ENCODE measurements at regions of chr6 and their contacts with region 1.

Region 1: DNA sequence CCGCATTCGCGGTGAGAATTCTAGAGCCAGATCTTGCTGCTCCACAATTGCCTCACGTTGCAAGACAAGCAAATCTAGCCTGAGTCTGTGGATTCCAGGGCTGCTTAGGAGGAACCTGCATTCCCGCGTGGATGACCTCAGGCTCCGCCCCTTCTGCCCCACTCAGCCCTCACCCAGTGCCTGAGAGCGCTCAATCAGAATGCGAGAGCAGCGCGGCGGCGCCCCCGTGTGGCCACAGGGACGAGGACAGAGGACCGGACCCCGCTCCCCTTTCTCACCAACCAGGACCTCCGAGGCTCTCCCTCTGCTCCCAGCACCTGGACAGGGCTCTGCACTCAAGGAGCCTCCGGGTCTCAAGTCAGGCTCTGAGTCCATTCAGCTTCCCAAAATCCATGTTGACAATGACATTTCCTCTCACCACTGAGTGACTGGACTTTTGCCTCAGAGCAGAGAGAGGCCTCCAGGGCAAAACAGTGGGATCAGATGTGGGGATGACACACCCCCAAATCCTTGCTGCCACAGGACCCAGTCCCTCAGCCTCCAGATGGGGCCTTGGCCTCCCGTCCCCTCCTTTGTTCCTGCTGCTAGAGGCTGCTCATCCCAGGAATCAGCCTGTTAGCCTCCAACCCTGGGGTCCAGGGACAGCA is 52.0 kb downstream of the RPP21 start:
- DNase-seq: peak; percentile 51
- ATAC-seq: peak; percentile 100
- H3K4me3 ChIP-seq: no peak overlapping the region
- H3K27ac ChIP-seq: no peak overlapping the region
- H3K4me1 ChIP-seq: peaks cover 0 to 9% of the 10 kb centered on the region in 2 experiments; a peak in 1 of 4 replicates
- H3K27me3 ChIP-seq: no peaks in the 10 kb centered on the region
- CTCF ChIP-seq: peak; percentile 86 to 96 (median 94)
- POLR2A ChIP-seq: no peak
- RAD21 ChIP-seq: peak; percentile 90

Region 2: DNA sequence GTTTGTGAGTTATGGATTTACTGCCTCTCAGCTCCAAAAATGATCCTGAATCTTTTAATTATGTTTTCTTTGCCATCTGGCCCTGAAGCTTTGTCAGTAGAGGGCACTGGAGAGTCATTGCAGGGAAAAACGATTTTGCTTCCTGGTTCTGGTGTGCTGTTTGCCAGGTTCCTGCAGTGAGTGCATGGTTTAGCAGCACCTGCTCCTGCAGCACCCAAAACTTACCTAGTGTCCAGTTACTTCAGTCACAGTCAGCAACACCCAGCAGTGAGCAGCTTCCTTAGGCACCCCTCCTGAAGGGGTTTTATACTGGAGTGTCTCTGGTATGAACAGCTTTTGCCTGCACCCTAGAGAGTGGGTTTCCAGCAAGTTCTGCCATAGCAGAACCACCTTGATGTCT is 177.7 kb before region 1 on chr6:
- CTCF ChIA-PET with region 1: interaction called, 5 read pairs
- POLR2A ChIA-PET with region 1: no interaction called
- RAD21 ChIA-PET with region 1: interaction called in 1 of 2 experiments, 3 read pairs
- intact Hi-C with region 1: loop called (anchors 5 kb)
- DNase-seq: no peak
- ATAC-seq: peak; percentile 68
- H3K4me3 ChIP-seq: no peak overlapping the region
- H3K27ac ChIP-seq: no peak overlapping the region
- H3K4me1 ChIP-seq: peaks cover 0 to 8% of the 10 kb centered on the region in 2 experiments; a peak in 2 of 4 replicates
- H3K27me3 ChIP-seq: no peaks in the 10 kb centered on the region
- CTCF ChIP-seq: peak; percentile 75 to 88 (median 87); a peak in 5 of 6 replicates
- POLR2A ChIP-seq: no peak
- RAD21 ChIP-seq: peak; percentile 75

Region 3: GRCh38 chr6:30238174-30238795 is 158.7 kb before region 1 on chr6:
- CTCF ChIA-PET with region 1: interaction called, 9 read pairs
- POLR2A ChIA-PET with region 1: no interaction called
- RAD21 ChIA-PET with region 1: no interaction called
- intact Hi-C with region 1: loop called (anchors 1 kb)
- DNase-seq: peak; percentile 27
- ATAC-seq: peak; percentile 97
- H3K4me3 ChIP-seq: no peak overlapping the region
- H3K27ac ChIP-seq: no peak overlapping the region
- H3K4me1 ChIP-seq: no peaks in the 10 kb centered on the region
- H3K27me3 ChIP-seq: peaks cover 16% of the 10 kb centered on the region
- CTCF ChIP-seq: peak; percentile 53 to 61 (median 58); a peak in 4 of 6 replicates
- POLR2A ChIP-seq: no peak
- RAD21 ChIP-seq: peak; percentile 74

Region 4: DNA sequence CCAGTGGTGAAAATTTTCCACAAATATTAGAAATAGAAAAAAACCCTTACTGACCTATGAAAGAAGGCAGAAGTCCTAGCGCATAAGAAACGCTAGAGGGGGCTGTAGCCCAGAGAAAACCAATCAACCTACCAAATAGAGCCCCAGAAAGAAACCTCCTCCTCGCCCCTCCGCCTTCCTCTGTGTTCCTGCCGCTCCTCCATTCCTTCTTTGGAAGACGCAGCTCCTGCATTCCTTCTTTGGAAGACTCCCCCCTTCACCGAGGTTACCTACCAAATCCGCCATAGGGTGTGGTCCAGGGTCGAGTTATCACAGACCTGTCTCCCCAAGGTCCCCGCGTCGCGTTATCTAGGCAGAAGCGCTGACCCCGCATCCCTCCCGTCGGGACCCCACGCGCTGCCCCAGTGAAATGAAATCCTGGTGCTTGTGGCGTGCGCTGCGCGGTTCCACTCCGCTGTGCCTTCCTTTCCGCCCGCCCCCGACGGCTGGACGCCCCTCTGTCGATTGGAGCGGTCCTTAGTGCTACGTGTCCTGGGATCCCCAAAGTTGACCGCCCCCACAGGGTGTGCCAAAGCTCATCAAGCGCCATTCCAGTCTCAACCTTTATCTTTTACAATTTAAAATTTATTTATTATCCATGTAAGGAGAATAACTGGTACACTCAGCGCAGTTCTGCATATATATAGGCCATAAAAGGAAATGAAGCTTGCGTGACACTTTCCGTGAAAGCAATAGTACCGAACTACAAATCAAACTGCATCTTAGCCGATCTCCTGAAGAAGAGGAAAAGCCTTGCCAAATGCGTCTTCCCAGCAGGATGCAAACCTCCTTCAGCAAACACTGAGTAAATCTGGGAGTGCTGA is 39.0 kb before region 1 on chr6:
- CTCF ChIA-PET with region 1: no interaction called
- POLR2A ChIA-PET with region 1: no interaction called
- RAD21 ChIA-PET with region 1: no interaction called
- intact Hi-C with region 1: loop called (anchors 1 kb)
- DNase-seq: peak; percentile 71
- ATAC-seq: peak; percentile 98
- H3K4me3 ChIP-seq: no peak overlapping the region
- H3K27ac ChIP-seq: no peak overlapping the region
- H3K4me1 ChIP-seq: peaks cover 0 to 6% of the 10 kb centered on the region in 2 experiments; a peak in 1 of 4 replicates
- H3K27me3 ChIP-seq: 0 out of 2 replicates have a peak, but pooled peaks cover 7% of the 10 kb centered on the region
- CTCF ChIP-seq: peak; percentile 78 to 84 (median 82)
- POLR2A ChIP-seq: no peak
- RAD21 ChIP-seq: peak; percentile 70

Region 5: GRCh38 chr6:30364591-30364990 is 32.4 kb before region 1 on chr6:
- CTCF ChIA-PET with region 1: no interaction called
- POLR2A ChIA-PET with region 1: no interaction called
- RAD21 ChIA-PET with region 1: no interaction called
- intact Hi-C with region 1: loop called (anchors 2 kb)
- DNase-seq: no peak
- ATAC-seq: peak; percentile 98
- H3K4me3 ChIP-seq: no peak overlapping the region
- H3K27ac ChIP-seq: no peak overlapping the region
- H3K4me1 ChIP-seq: no peaks in the 10 kb centered on the region
- H3K27me3 ChIP-seq: peaks cover 11% of the 10 kb centered on the region; the same call in 1 of the 2 replicates
- CTCF ChIP-seq: peak; percentile 48 to 64 (median 61)
- POLR2A ChIP-seq: no peak
- RAD21 ChIP-seq: peak; percentile 53

Region 6: DNA sequence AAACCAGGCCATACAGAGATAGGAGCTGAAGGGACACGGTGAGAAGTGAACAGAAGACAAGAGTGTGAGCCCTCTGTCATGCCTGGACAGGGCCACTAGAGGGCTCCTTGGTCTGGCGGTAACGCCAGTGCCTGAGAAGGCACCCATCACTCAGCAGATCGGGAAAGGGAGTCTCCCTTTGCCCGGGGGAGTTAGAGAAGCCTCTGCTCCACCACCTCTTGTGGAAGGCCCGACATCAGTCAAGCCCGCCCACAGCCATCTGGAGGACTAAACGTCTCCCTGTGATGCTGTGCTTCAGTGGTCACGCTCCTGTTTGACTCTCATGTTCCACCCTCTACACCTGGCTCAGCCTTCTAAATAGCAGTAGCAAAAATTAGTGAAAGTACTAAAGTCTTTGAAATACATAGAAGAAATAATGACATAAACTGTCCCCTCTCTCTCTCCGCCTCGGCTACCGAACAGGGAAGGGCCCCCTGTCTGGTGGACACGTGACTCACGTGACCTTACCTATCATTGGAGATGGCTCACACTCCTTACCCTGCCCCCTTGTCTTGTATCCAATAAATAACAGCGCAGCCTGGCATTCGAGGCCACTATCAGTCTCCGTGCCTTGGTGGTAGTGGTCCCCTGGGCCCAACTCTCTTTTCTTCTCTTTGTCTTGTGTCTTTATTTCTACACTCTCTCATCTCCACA is 14.7 kb after region 1 on chr6:
- CTCF ChIA-PET with region 1: interaction called, 16 read pairs
- POLR2A ChIA-PET with region 1: no interaction called
- RAD21 ChIA-PET with region 1: no interaction called
- intact Hi-C with region 1: no loop called
- DNase-seq: peak; percentile 61
- ATAC-seq: peak; percentile 97
- H3K4me3 ChIP-seq: no peak overlapping the region; a peak in 1 of 4 replicates
- H3K27ac ChIP-seq: no peak overlapping the region
- H3K4me1 ChIP-seq: peaks cover 0 to 5% of the 10 kb centered on the region in 2 experiments; a peak in 1 of 4 replicates
- H3K27me3 ChIP-seq: no peaks in the 10 kb centered on the region
- CTCF ChIP-seq: peak; percentile 74 to 90 (median 76); a peak in 5 of 6 replicates
- POLR2A ChIP-seq: no peak
- RAD21 ChIP-seq: peak; percentile 67

Measured in HCT116 (cell line).